ENCODE measurements at regions of chr15 and their contacts with region 1.

Region 1: DNA sequence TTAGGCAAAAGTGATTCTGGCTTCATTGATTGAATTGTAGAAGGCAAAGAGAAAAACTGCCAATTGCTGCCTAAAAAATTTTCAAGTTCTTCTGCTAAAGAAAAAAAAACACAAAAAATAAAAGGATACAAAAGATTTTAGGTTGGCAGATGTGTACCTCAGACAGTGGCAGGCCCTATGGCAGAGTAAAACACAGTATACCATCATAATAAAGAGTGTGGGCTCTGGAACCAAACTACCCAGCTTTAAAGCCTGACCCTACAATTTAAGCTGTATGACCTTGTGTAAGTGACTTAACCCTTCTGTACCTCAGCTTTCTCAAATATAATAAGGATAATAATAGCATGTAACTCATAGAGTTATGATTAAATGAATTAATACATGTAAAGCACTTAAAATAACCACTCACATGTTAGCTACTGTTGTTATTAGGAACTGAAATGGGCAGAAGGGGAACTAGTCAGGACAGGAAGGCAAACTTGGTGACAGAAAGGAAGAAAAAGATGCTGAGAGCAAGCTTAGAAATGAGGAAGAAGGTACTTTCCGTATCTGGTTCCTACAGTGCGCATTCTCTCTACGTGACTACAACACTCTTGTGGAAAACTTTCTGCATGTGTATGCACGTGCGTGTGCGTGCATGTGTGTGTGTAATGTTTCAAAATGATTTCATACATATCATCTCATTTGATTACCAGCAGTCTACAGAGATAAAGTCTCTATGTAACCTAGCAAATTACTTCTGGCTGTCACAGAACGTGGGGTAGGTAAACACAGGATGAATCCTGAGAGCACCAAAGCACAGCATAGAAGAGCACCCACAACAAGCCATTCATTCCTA is 13.6 kb upstream of the GATM start:
- DNase-seq: peak; percentile 90
- ATAC-seq: peak; percentile 96
- H3K4me3 ChIP-seq: 0 out of 2 replicates have a peak overlapping the region, but pooled peaks have one; percentile 11
- H3K27ac ChIP-seq: peak overlapping the region; percentile 72
- H3K4me1 ChIP-seq: peaks cover 21% of the 10 kb centered on the region
- H3K27me3 ChIP-seq: no peaks in the 10 kb centered on the region
- CTCF ChIP-seq: no peak
- EP300 ChIP-seq: peak; percentile 76 to 85
- POLR2A ChIP-seq: no peak
- RAD21 ChIP-seq: no peak

Region 2: DNA sequence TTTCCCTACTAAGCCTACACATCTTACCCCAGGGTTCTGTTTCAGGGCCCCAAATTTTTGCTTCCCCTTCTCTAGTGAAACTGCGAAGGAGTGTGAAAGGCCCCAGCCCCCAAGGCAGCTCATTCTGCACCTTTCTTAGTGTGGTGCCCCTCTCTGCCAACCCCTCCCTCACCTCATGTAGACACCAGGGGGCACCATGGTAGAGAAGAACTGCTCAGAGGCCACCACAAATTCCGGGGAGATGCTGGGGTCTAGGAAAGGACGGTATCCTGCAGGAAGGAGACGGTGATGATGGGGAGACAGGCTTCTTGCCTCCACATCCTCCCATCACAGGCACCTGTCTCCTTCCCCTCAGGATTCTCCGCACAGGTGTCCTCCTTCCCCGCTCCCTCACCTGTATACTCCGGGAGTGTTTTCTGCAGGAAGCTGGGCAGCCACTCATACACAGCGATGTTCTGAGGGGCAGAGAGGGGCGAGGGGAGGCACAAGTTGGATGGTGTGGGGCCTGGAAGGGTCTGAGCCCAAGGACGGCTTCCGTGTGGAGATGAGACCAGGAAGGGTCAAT is 281.6 kb before region 1 on chr15:
- CTCF ChIA-PET with region 1: no interaction called
- POLR2A ChIA-PET with region 1: no interaction called
- RAD21 ChIA-PET with region 1: no interaction called
- SMC1A ChIA-PET with region 1: no interaction called
- in situ Hi-C with region 1: no loop called
- intact Hi-C with region 1: no loop called
- DNase-seq: no peak
- ATAC-seq: no peak
- H3K4me3 ChIP-seq: no peak overlapping the region
- H3K27ac ChIP-seq: no peak overlapping the region
- H3K4me1 ChIP-seq: no peaks in the 10 kb centered on the region; the same call in 1 of the 2 replicates
- H3K27me3 ChIP-seq: peaks cover 21 to 27% of the 10 kb centered on the region in 2 experiments
- CTCF ChIP-seq: peak in 2 of 3 experiments; percentile 12 to 20; a peak in 2 of 6 replicates
- EP300 ChIP-seq: no peak
- POLR2A ChIP-seq: no peak
- RAD21 ChIP-seq: no peak

Region 3: GRCh38 chr15:45254405-45254804 is 137.6 kb before region 1 on chr15:
- CTCF ChIA-PET with region 1: no interaction called
- POLR2A ChIA-PET with region 1: no interaction called
- RAD21 ChIA-PET with region 1: no interaction called
- SMC1A ChIA-PET with region 1: no interaction called
- in situ Hi-C with region 1: no loop called
- intact Hi-C with region 1: no loop called
- DNase-seq: no peak
- ATAC-seq: no peak
- H3K4me3 ChIP-seq: no peak overlapping the region
- H3K27ac ChIP-seq: no peak overlapping the region
- H3K4me1 ChIP-seq: no peaks in the 10 kb centered on the region
- H3K27me3 ChIP-seq: no peaks in the 10 kb centered on the region
- CTCF ChIP-seq: no peak
- EP300 ChIP-seq: no peak
- POLR2A ChIP-seq: no peak
- RAD21 ChIP-seq: no peak

Region 4: DNA sequence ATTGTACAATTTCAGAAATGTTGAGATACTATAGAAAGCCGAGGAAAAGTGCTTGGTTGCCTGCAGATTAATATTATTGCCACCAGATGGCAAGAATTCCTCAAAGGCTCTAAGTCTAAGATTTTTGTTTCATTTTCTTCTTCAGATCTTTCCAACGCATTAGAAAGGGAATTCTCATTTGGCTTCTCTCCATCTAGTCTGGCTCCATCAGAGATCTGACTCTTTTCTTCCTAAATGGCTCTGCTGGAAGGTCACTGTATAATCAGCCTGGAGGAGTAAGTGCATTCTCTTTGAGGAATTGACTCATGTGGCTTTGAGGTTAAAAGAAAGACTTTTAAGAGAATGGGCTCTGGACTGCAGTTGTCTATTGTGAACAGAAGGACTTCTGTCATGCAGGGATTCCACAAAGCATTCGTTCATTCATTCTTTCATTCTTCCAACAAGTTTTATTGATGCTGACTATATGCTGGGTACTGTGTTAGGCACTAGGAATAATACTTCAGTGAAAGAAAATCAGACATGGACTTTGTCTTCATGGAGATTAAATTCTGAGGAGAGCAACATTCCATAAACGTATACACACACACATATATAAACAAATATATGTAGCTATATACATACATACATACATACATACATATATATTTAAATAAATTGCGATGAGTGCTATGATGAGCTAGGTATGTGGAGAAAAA is 84.6 kb before region 1 on chr15:
- CTCF ChIA-PET with region 1: interaction called, 67 read pairs
- POLR2A ChIA-PET with region 1: interaction called, 4 read pairs
- RAD21 ChIA-PET with region 1: interaction called, 5 read pairs
- SMC1A ChIA-PET with region 1: interaction called, 18 read pairs
- in situ Hi-C with region 1: loop called (anchors 5 kb)
- intact Hi-C with region 1: no loop called
- DNase-seq: peak; percentile 31
- ATAC-seq: peak; percentile 71
- H3K4me3 ChIP-seq: peak overlapping the region; percentile 60; the same call in 1 of the 2 replicates
- H3K27ac ChIP-seq: no peak overlapping the region
- H3K4me1 ChIP-seq: no peaks in the 10 kb centered on the region
- H3K27me3 ChIP-seq: no peaks in the 10 kb centered on the region
- CTCF ChIP-seq: peak; percentile 39 to 65 (median 58); a peak in 5 of 6 replicates
- EP300 ChIP-seq: no peak
- POLR2A ChIP-seq: no peak
- RAD21 ChIP-seq: peak; percentile 58

Region 5: GRCh38 chr15:45372041-45372995 is 19.6 kb before region 1 on chr15:
- CTCF ChIA-PET with region 1: interaction called, 18 read pairs
- POLR2A ChIA-PET with region 1: interaction called, 17 read pairs
- RAD21 ChIA-PET with region 1: interaction called, 6 read pairs
- SMC1A ChIA-PET with region 1: interaction called, 37 read pairs
- in situ Hi-C with region 1: no loop called
- intact Hi-C with region 1: no loop called
- DNase-seq: no peak
- ATAC-seq: peak; percentile 48; the same call in 2 of the 3 replicates
- H3K4me3 ChIP-seq: no peak overlapping the region
- H3K27ac ChIP-seq: no peak overlapping the region
- H3K4me1 ChIP-seq: no peaks in the 10 kb centered on the region
- H3K27me3 ChIP-seq: no peaks in the 10 kb centered on the region
- CTCF ChIP-seq: no peak
- EP300 ChIP-seq: no peak
- POLR2A ChIP-seq: no peak
- RAD21 ChIP-seq: no peak

Region 6: GRCh38 chr15:45378149-45378912 is 13.6 kb before region 1 on chr15 and contains the start of gene GATM:
- CTCF ChIA-PET with region 1: interaction called, 37 read pairs
- POLR2A ChIA-PET with region 1: interaction called, 17 read pairs
- RAD21 ChIA-PET with region 1: interaction called, 10 read pairs
- SMC1A ChIA-PET with region 1: interaction called, 37 read pairs
- in situ Hi-C with region 1: no loop called
- intact Hi-C with region 1: no loop called
- DNase-seq: peak; percentile 66
- ATAC-seq: peak; percentile 91
- H3K4me3 ChIP-seq: peak within 1 kb of the TSS; percentile 78
- H3K27ac ChIP-seq: peak within 1 kb of the TSS; percentile 64
- H3K4me1 ChIP-seq: no peaks in the 10 kb centered on the region
- H3K27me3 ChIP-seq: no peaks in the 10 kb centered on the region
- CTCF ChIP-seq: peak; percentile 3 to 28 (median 23); a peak in 3 of 6 replicates
- EP300 ChIP-seq: 0 out of 4 replicates have a peak, but pooled peaks of 1 of the 2 experiments have one; percentile 44
- POLR2A ChIP-seq: peak; percentile 94
- RAD21 ChIP-seq: no peak
- polyA plus RNA-seq, gene GATM: 11.7 to 17.6 TPM

Region 7: GRCh38 chr15:45414215-45414885 is 22.4 kb after region 1 on chr15:
- CTCF ChIA-PET with region 1: interaction called, 4 read pairs
- POLR2A ChIA-PET with region 1: no interaction called
- RAD21 ChIA-PET with region 1: no interaction called
- SMC1A ChIA-PET with region 1: no interaction called
- in situ Hi-C with region 1: no loop called
- intact Hi-C with region 1: loop called (anchors 2 kb)
- DNase-seq: no peak
- ATAC-seq: peak; percentile 74
- H3K4me3 ChIP-seq: no peak overlapping the region
- H3K27ac ChIP-seq: no peak overlapping the region
- H3K4me1 ChIP-seq: no peaks in the 10 kb centered on the region
- H3K27me3 ChIP-seq: no peaks in the 10 kb centered on the region
- CTCF ChIP-seq: no peak
- EP300 ChIP-seq: no peak
- POLR2A ChIP-seq: no peak
- RAD21 ChIP-seq: no peak

Region 8: GRCh38 chr15:45471151-45471550 is 79.2 kb after region 1 on chr15:
- CTCF ChIA-PET with region 1: no interaction called
- POLR2A ChIA-PET with region 1: no interaction called
- RAD21 ChIA-PET with region 1: no interaction called
- SMC1A ChIA-PET with region 1: no interaction called
- in situ Hi-C with region 1: no loop called
- intact Hi-C with region 1: no loop called
- DNase-seq: no peak
- ATAC-seq: no peak
- H3K4me3 ChIP-seq: no peak overlapping the region
- H3K27ac ChIP-seq: no peak overlapping the region
- H3K4me1 ChIP-seq: no peaks in the 10 kb centered on the region
- H3K27me3 ChIP-seq: no peaks in the 10 kb centered on the region; a peak in 1 of 4 replicates
- CTCF ChIP-seq: no peak
- EP300 ChIP-seq: no peak
- POLR2A ChIP-seq: no peak
- RAD21 ChIP-seq: no peak